PC-3 (cell line): ENCODE measurements at regions of chr5 and their contacts with region 1.

Region 1: DNA sequence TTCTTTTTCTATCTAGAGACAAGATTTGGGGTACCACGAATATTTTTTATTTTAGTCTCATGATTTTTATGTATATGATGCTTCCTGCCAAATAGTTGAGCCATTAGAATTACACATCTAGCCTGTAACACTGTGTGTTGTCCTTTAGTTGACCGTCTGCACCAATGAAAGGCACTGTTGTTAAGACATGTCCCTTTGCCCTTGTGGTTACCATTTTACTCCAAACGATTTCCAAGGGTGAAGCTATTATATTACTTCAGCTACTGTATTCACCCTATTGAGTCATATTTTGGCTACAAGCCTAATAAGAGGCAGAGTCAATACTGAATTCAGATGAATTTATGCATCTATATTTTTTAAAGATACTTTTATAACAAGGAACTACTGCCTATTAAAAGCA is 207.6 kb downstream of the CETN3 start:
- DNase-seq: peak; percentile 94
- ATAC-seq: peak; percentile 96
- H3K4me3 ChIP-seq: no peak overlapping the region
- H3K27ac ChIP-seq: no peak overlapping the region
- H3K4me1 ChIP-seq: peaks cover 12% of the 10 kb centered on the region
- H3K27me3 ChIP-seq: no peaks in the 10 kb centered on the region
- CTCF ChIP-seq: no peak

Region 2: DNA sequence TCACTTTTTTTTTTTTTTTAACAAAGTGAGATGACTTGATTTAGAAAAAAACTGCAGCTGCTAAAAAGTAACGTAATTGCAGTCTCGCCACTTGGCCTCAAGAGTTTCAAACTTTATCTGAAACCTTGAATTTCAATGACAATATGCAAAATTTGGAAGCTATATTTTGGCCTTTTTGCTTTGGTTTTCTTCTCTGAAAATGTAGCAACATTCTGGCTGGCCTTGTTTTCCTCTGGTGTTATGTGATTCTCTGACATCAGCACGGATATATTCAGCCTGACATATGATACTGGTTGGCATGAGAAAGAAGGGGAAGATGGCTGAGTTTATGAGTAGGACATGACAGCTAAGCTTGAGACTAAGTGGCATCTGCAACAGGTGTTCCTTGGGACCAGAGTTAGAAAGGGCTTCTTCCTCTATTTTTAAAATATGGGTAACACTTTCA is 1455.5 kb before region 1 on chr5:
- CTCF ChIA-PET with region 1: no interaction called
- POLR2A ChIA-PET with region 1: interaction called, 17 read pairs
- intact Hi-C with region 1: no loop called
- DNase-seq: no peak
- ATAC-seq: no peak
- H3K4me3 ChIP-seq: no peak overlapping the region
- H3K27ac ChIP-seq: no peak overlapping the region
- H3K4me1 ChIP-seq: peaks cover 12% of the 10 kb centered on the region
- H3K27me3 ChIP-seq: no peaks in the 10 kb centered on the region
- CTCF ChIP-seq: no peak

Region 3: GRCh38 chr5:90119531-90120006 is 82.4 kb before region 1 on chr5:
- CTCF ChIA-PET with region 1: no interaction called
- POLR2A ChIA-PET with region 1: no interaction called
- intact Hi-C with region 1: no loop called
- DNase-seq: peak; percentile 85
- ATAC-seq: peak; percentile 83
- H3K4me3 ChIP-seq: no peak overlapping the region
- H3K27ac ChIP-seq: no peak overlapping the region
- H3K4me1 ChIP-seq: peaks cover 18% of the 10 kb centered on the region
- H3K27me3 ChIP-seq: no peaks in the 10 kb centered on the region
- CTCF ChIP-seq: no peak

Region 4: GRCh38 chr5:90161414-90161813 is 40.5 kb before region 1 on chr5:
- CTCF ChIA-PET with region 1: no interaction called
- POLR2A ChIA-PET with region 1: no interaction called
- intact Hi-C with region 1: no loop called
- DNase-seq: peak; percentile 29
- ATAC-seq: peak; percentile 24; the same call in 1 of the 2 replicates
- H3K4me3 ChIP-seq: no peak overlapping the region
- H3K27ac ChIP-seq: no peak overlapping the region
- H3K4me1 ChIP-seq: no peaks in the 10 kb centered on the region
- H3K27me3 ChIP-seq: no peaks in the 10 kb centered on the region
- CTCF ChIP-seq: peak; percentile 43

Region 5: DNA sequence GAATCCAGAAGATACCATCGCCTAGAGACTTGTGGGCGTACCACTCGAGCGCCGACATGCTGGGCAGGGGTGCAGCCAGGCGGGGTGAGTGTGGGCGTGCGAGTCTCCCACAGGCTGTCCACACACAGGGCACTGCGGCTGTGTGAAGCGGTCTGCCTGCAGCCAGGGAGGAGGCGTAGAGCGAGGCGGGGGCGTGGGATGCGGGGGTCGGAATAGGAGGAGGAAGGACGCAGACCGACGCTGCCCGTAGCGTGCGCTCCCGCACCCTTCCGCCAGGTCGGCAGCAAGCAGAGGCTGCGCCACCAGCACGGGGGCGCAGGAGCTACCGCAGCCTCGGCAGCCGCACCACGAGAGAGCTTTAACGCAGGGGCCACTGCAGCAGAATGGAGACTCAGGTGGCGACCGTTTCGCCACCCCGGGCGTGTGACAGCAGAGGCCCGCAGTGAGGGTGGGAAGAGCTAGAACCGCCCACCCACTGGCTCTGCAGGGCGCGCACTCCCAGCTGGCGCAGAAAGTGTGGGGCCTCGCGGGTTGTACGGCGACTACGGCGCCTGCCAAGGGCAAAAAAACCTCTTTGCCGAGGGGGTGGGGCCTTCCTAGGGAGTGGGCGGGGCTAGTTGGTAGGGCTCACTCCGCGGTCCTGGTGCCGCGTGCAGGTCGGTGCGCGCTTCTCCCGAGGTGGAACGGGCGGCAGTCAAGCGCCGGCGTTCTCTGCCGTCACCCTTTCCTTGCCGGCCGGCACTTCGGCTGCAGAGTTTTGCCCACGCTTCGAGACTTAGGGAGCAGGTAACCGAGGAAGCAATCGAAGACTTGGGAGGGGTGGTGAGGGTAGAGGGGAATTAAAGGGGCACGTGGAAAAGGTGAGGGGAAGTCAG is 272.5 kb after region 1 on chr5 and contains the starts of genes MBLAC2 and POLR3G:
- CTCF ChIA-PET with region 1: no interaction called
- POLR2A ChIA-PET with region 1: no interaction called
- intact Hi-C with region 1: no loop called
- DNase-seq: peak; percentile 95
- ATAC-seq: peak; percentile 76
- H3K4me3 ChIP-seq: peak within 1 kb of the TSS; percentile 94
- H3K27ac ChIP-seq: peak within 1 kb of the TSS; percentile 68
- H3K4me1 ChIP-seq: peaks cover 29% of the 10 kb centered on the region
- H3K27me3 ChIP-seq: no peaks in the 10 kb centered on the region
- CTCF ChIP-seq: peak; percentile 48
- total RNA-seq, gene MBLAC2: 7.8 and 12.4 TPM in 2 replicates
- total RNA-seq, gene POLR3G: 34.6 and 42.2 TPM in 2 replicates